ENCODE measurements at regions of chr22 and their contacts with region 1.

Region 1: DNA sequence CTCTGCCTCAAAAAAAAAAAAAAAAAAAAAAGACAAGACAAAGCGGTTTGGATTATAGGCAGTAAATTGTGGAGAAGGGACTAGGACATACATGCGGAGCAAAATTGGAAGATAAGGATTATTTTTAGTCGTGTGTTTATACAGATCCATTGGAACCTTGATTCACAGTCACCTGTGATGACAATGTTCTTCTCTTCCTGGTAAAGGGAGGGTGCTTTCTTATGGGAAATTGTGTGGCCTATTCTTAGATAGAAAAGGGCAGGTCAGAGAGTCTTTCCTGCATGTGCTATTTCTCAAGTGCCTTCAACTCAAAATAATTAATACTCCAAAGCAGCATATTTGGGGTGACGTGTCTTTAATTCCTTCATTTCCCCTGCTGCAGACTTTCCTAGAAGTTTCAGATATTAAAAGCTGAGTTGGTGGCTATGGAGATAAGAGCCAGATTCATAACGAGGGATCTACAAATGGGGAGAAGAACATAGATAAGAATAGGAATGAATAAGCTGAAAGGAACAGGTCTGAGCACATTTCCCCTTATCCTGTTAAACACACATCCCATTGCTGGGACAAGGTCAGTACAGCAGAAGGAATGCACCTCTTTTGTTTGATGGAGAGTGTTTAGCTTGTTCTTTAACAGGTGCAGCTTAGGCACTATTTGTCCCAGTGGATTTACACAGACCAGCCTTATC is 22.5 kb downstream of the GSTT2B start:
- DNase-seq: no peak
- ATAC-seq: no peak
- H3K4me3 ChIP-seq: no peak overlapping the region
- H3K27ac ChIP-seq: no peak overlapping the region
- H3K4me1 ChIP-seq: no peaks in the 10 kb centered on the region
- H3K27me3 ChIP-seq: peaks cover 5% of the 10 kb centered on the region
- CTCF ChIP-seq: no peak
- POLR2A ChIP-seq: no peak
- RAD21 ChIP-seq: no peak

Region 2: GRCh38 chr22:23878219-23878618 is 60.3 kb before region 1 on chr22:
- CTCF ChIA-PET with region 1: no interaction called
- POLR2A ChIA-PET with region 1: no interaction called
- dilution Hi-C with region 1: no loop called
- in situ Hi-C with region 1: loop called (anchors 5 kb)
- intact Hi-C with region 1: no loop called
- DNase-seq: no peak
- ATAC-seq: no peak
- H3K4me3 ChIP-seq: no peak overlapping the region
- H3K27ac ChIP-seq: no peak overlapping the region
- H3K4me1 ChIP-seq: no peaks in the 10 kb centered on the region
- H3K27me3 ChIP-seq: no peaks in the 10 kb centered on the region
- CTCF ChIP-seq: no peak
- POLR2A ChIP-seq: no peak
- RAD21 ChIP-seq: no peak

Measured in IMR-90 (cell line).